MCF 10A (cell line): ENCODE measurements at regions of chr1 and their contacts with region 1.

Region 1: GRCh38 chr1:8497210-8497801 is 179.4 kb downstream of the SLC45A1 start:
- DNase-seq: peak; percentile 80
- H3K4me3 Mint-ChIP-seq: no peak overlapping the region
- H3K27ac Mint-ChIP-seq: peak overlapping the region; percentile 4
- H3K4me1 Mint-ChIP-seq: peaks cover 9% of the 10 kb centered on the region
- H3K27me3 Mint-ChIP-seq: no peaks in the 10 kb centered on the region
- CTCF ChIP-seq: no peak

Region 2: DNA sequence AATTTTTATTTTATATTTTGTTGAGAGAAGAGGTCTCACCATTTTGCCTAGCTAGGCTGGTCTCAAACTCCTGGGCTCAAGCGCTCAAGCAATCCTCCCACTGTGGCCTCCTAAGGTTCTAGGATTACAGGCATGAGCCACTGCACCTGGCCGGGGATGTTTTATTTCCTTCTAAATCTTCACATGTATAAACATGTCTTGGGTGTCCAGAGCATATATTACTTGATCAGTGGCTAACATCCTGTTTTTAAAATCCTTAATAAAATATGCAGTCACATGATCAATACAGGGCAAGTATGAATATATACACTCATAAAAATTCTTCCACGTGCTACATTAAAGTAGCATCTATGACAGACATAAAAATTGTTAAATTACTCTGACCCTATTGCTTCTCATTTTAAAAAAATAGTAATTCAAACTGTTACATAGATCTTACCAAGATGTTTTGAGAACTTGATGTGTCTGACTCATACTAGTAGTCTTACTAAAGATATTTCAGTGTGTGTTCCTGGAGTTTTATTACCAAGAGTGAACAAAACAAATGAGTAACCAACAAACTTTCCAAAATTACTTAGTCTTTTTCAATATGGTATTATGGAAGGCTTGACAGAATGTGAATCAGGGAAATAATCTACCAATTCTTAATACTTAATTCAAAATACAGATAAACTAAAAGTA is 43.1 kb after region 1 on chr1:
- CTCF ChIA-PET with region 1: no interaction called
- POLR2A ChIA-PET with region 1: interaction called, 4 read pairs
- intact Hi-C with region 1: loop called (anchors 1 kb)
- DNase-seq: peak; percentile 64
- H3K4me3 Mint-ChIP-seq: peak overlapping the region; percentile 51
- H3K27ac Mint-ChIP-seq: peak overlapping the region; percentile 99
- H3K4me1 Mint-ChIP-seq: peaks cover 20% of the 10 kb centered on the region
- H3K27me3 Mint-ChIP-seq: no peaks in the 10 kb centered on the region
- CTCF ChIP-seq: no peak